ENCODE measurements at regions of chr7 and their contacts with region 1.

Region 1: DNA sequence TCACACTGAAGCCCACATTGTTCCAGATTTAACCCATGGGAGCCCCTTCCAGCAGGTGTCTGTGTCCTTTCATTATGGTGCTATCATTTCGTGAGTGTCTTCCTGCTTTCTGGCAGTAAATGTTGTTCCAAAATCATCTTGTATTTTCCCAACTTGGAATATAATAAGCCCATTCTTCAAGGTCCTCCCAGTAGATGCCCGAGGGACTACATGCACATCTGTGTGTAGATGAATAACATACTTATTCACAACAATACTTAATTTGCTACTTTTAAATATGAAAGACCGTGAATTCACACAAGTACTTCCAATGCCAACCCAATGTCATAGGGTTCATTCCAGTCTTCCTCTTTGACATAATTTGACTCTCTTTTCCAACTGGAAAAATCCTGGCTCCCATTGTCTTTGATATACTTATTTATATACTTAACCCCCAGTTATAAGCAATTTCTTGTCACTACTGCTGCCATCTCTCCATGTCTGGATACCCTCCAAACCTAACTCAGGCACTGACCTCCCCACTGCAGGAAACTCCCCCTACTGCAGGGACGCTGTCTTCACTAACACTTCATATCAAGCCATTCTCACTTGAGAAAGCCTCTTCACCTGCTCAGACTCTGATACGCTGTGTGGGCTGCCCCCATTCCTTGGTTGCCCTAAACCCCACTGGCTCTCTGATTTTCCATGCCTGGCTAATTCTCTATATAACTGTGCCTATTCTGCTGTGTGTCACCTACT is 1119.2 kb downstream of the CNTNAP2 start:
- H3K4me3 Mint-ChIP-seq: no peak overlapping the region
- H3K27ac Mint-ChIP-seq: no peak overlapping the region
- H3K4me1 Mint-ChIP-seq: no peaks in the 10 kb centered on the region
- H3K27me3 Mint-ChIP-seq: no peaks in the 10 kb centered on the region

Region 2: GRCh38 chr7:146683439-146683838 is 552.4 kb before region 1 on chr7:
- intact Hi-C with region 1: no loop called
- H3K4me3 Mint-ChIP-seq: no peak overlapping the region
- H3K27ac Mint-ChIP-seq: no peak overlapping the region
- H3K4me1 Mint-ChIP-seq: no peaks in the 10 kb centered on the region
- H3K27me3 Mint-ChIP-seq: no peaks in the 10 kb centered on the region

Region 3: GRCh38 chr7:147498081-147498480 is 262.3 kb after region 1 on chr7:
- intact Hi-C with region 1: no loop called
- H3K4me3 Mint-ChIP-seq: no peak overlapping the region
- H3K27ac Mint-ChIP-seq: no peak overlapping the region
- H3K4me1 Mint-ChIP-seq: no peaks in the 10 kb centered on the region
- H3K27me3 Mint-ChIP-seq: no peaks in the 10 kb centered on the region

Region 4: GRCh38 chr7:147650991-147651390 is 415.2 kb after region 1 on chr7:
- intact Hi-C with region 1: loop called (anchors 5 kb)
- H3K4me3 Mint-ChIP-seq: no peak overlapping the region
- H3K27ac Mint-ChIP-seq: no peak overlapping the region
- H3K4me1 Mint-ChIP-seq: no peaks in the 10 kb centered on the region
- H3K27me3 Mint-ChIP-seq: no peaks in the 10 kb centered on the region

Measured in dendritic cell treated with granulocyte-macrophage colony-stimulating factor and Interleukin-4, amounts not matched to agents 40 ng/mL and 50 ng/mL, for 4 days (primary cell).